Common myeloid progenitor, CD34-positive (primary cell): ENCODE measurements at regions of chr1 and their contacts with region 1.

Region 1: DNA sequence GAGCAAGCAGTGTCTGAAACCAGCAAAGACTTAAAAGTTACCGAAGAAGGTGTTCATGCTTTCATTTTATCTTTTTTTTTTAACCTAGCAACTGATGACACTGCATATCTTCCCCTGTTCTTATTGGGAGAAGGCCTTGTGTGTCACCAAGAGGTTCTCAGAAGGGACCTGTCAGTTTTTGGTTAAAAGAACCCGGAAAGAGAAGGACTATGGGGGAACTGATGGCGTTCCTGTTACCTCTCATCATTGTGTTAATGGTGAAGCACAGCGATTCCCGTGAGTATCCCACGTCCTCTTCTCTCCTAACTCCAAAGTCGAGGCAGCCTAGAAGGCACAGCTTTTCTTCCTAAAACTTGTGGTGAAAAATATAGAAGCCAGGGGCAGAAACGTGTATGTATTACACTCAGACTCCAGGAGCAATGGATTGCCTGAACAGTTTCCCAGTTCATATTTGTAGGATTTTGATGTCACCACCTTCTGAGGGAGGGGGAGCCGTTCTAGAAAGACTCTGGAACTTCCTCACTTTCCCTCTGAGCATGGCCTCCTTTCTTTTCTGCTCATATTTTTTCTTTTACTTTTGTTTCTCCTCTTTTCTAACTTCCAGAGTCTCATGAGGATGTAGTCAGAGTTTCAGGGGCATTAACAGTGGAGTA is at the start of gene MR1:
- DNase-seq: peak; percentile 91 to 95 (median 94)
- H3K4me3 ChIP-seq: peak within 1 kb of the TSS in 6 of 7 experiments; percentile 69 to 90 (median 79)
- H3K27ac ChIP-seq: peak within 1 kb of the TSS; percentile 84 to 91
- H3K4me1 ChIP-seq: peaks cover 3 to 28% (median 19%) of the 10 kb centered on the region in 4 experiments
- H3K27me3 ChIP-seq: no peaks in the 10 kb centered on the region

Region 2: DNA sequence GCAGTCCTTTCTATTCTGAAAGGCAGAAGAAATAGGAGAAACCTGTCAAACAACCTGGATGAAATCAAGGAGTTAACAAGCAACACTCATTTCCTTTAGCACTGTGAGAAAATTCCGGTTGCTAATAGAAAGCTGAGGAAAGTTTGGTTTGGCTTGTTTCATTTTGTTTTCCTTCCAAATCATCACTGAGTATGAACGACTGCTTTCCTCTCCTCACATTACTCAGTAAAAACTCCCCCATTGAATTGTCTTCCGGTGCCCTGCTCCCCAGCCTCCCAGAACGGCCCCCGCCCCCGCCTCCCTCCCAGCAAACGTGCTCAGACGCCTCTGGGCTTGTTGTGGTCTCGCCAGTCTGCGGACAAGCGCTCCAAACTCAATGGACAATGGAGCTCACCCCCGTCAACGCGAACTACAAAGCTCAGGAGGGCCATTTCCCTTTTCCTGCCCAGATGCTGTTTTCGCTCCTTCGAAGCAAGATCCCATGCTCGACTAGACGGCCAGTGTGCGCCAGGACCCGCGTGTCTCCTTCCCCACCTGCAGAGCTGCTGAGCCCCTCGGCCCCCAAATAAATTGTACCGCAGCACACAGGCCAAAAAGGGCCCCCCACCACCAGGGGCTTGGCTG is 12.0 kb before region 1 on chr1:
- CTCF ChIA-PET with region 1: interaction called, 19 read pairs
- POLR2A ChIA-PET with region 1: interaction called, 13 read pairs
- DNase-seq: peak; percentile 31 to 67 (median 58)
- H3K4me3 ChIP-seq: peak overlapping the region; percentile 78 to 96 (median 83)
- H3K27ac ChIP-seq: peak overlapping the region; percentile 25 to 83
- H3K4me1 ChIP-seq: peaks cover 12 to 27% (median 21%) of the 10 kb centered on the region in 4 experiments
- H3K27me3 ChIP-seq: no peaks in the 10 kb centered on the region

Region 3: DNA sequence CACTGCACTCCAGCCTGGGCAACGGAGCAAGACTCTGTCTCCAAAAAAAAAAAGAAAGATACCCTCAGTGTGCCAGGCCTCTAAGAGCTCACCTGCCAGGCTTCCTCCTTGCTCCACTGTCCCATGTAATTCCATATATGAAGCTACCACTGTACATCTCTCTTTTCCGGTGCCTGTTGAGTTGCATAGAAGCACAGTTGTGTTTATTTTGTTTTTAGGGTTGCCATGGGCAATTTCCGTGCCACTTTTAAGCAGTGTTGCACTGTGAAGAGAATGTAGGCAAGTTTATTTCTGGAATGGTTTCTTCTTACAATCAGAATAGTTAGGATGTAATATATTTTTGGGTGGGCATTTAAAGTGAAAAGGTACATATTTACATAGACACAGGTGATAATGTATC is 23.2 kb after region 1 on chr1:
- CTCF ChIA-PET with region 1: interaction called, 13 read pairs
- POLR2A ChIA-PET with region 1: no interaction called
- DNase-seq: no peak
- H3K4me3 ChIP-seq: no peak overlapping the region
- H3K27ac ChIP-seq: no peak overlapping the region
- H3K4me1 ChIP-seq: peaks cover 0 to 6% (median 2%) of the 10 kb centered on the region in 4 experiments
- H3K27me3 ChIP-seq: no peaks in the 10 kb centered on the region

Region 4: DNA sequence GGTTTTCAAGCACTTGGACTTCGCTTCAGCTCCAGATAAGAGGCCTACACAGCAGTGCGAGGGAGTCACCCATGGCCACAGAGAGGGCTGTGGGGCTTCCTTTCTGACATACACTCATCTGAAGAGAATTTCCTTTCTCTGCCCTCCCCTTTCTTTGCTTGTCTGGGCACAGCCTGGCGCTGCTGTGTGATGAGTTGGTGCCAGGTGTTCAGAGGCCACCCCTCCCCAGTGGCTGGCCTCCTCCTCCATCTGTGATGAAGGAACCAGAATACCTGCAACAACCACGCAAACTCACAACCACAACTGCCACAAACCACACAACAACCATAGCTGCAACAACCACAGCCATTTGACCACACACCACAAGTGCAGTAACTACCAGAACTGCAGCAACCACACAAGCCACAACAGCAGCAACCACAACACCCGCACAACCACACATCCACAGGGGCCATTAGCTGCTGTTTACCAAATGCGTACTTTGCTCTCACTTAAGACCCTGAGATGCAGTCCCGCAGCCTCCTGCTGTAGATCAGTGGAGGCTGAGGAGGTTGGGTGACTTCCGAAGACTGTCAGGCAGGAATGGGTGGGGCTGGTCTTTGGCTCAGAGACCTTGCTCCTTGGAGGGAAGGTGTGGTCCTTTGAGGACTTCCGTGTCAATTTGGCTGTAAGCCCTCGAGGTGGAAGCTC is 125.7 kb after region 1 on chr1:
- CTCF ChIA-PET with region 1: interaction called, 10 read pairs
- POLR2A ChIA-PET with region 1: no interaction called
- DNase-seq: peak; percentile 34 to 79 (median 74)
- H3K4me3 ChIP-seq: no peak overlapping the region
- H3K27ac ChIP-seq: no peak overlapping the region
- H3K4me1 ChIP-seq: peaks cover 0 to 12% (median 10%) of the 10 kb centered on the region in 4 experiments
- H3K27me3 ChIP-seq: peaks cover 0 to 4% (median 0%) of the 10 kb centered on the region in 5 experiments

Region 5: DNA sequence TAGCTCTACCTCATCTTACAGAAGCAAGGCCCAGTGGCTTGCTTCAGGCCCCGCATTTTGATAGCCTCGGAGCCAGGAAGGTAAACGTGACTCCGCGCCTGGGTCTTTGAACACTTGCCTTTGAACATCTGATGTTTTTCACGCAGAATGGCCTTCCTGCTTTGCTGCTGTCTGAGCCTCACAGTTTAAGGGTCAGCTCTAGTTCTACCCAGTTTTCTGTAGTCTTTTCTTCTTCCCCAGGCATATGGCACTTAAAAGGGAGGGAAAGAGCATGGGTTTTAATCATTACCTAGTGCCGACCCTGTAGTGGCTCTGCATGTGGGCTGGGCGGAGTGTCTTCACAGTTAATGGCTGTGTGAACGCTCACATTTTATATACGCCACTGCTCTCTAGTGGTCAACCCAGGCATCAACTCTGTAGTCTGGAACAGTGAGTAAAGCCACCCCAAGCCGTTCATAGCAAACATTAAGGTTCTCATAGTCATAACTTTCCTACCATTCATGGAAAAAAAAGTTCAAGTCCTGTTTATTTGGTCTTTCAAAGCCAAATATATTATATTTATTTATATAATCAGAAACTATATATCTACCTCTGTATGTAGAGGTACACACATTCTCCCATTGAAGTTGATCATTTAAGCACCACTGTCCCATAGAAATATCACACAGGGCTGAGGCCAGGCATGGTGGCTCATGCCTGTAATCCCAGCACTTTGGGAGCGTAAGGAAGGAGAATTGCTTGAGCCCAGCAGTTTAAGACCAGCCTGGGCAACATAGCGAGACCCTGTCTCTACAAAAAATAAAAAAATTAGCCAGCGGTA is 132.7 kb after region 1 on chr1:
- CTCF ChIA-PET with region 1: interaction called, 11 read pairs
- POLR2A ChIA-PET with region 1: no interaction called
- DNase-seq: peak; percentile 79 to 90 (median 89)
- H3K4me3 ChIP-seq: no peak overlapping the region
- H3K27ac ChIP-seq: no peak overlapping the region
- H3K4me1 ChIP-seq: peaks cover 0 to 4% (median 0%) of the 10 kb centered on the region in 4 experiments
- H3K27me3 ChIP-seq: peaks cover 0 to 6% (median 0%) of the 10 kb centered on the region in 5 experiments